ENCODE measurements at regions of chr20 and their contacts with region 1.

Region 1: DNA sequence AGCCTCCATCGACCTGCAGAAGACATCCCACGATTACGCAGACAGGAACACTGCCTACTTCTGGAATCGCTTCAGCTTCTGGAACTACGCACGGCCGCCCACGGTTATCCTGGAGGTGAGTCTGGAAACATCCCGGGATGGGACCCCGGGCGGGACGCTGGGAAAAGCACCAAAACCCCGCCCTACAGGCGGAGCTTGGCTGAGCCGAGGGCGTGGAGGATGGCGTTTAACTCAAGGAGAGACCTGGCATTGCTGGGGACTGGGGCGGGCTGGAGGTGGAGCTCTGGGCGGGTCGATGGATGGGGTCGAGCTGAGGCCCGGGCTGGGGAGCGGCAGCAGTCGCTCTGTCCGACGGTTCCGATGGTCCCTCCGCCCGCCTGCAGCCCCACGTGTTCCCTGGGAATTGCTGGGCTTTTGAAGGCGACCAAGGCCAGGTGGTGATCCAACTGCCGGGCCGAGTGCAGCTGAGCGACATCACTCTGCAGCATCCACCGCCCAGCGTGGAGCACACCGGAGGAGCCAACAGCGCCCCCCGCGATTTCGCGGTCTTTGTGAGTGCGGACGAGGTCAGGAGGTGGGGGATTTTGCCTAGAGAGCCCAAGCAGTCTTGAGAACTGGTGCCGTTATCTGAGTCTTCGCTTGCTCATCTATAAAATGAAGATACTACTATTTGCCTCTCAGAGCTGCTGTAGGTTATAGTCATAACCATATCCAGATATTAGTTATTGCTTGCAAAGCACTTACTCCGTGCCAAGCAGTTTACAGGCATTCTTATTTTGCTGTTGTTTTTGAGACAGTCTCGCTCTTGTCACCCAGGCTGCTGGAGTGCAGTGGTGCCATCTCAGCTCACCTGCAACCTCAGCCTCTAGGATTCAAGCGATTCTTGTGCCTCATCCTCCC is 3.8 kb downstream of the SPAG4 start:
- DNase-seq: peak; percentile 78
- H3K4me3 ChIP-seq: peak overlapping the region; percentile 25 to 55 (median 51)
- H3K27ac ChIP-seq: no peak overlapping the region
- H3K4me1 ChIP-seq: peaks cover 33% of the 10 kb centered on the region
- H3K27me3 ChIP-seq: no peaks in the 10 kb centered on the region
- CTCF ChIP-seq: peak; percentile 33 to 46

Region 2: DNA sequence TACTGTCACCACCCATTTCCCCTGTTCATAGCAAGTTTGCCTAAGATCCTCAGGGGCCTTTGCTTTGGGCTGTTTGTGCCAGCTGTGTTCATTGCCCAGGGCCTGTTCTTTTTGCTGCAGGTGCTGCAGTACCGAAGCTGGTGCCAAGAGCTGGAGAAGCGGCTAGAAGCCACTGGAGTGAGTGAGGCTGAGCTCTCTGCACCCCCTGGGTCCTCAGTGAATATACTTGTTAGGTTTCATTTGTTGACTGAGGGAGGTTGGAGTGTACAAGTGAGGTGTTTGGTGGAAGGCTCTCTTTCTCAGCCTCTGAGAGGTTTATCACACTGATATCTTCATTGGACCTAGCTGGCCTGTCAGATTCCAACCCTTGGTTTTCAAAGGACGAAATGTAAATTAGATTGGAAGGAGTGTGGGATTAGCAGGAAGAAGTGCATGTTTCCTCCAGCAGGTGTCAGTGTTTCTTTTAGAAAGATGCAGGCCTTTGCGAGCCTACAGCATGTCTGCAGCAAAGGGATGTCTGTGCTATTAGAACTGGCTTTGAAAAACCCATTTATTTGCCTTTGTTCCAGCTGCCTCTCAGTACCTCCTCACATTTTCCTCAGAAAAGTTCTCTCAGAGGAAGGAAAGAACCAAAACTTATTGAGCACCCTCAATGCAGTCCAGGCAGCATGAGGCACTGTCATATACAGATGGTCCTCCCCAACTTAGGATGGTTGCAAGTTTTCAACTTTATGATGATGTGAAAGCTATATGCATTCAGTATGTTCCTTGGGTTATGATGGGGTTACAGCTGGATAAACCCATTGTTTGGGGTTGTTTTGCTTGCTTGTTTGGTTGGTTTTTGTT is 155.8 kb before region 1 on chr20:
- CTCF ChIA-PET with region 1: interaction called, 19 read pairs
- dilution Hi-C with region 1: no loop called
- in situ Hi-C with region 1: no loop called
- intact Hi-C with region 1: loop called (anchors 5 kb)
- DNase-seq: peak; percentile 29
- H3K4me3 ChIP-seq: no peak overlapping the region
- H3K27ac ChIP-seq: no peak overlapping the region
- H3K4me1 ChIP-seq: no peaks in the 10 kb centered on the region
- H3K27me3 ChIP-seq: no peaks in the 10 kb centered on the region
- CTCF ChIP-seq: peak; percentile 71 to 78

Region 3: GRCh38 chr20:35568645-35569262 is 50.7 kb before region 1 on chr20:
- CTCF ChIA-PET with region 1: no interaction called
- dilution Hi-C with region 1: no loop called
- in situ Hi-C with region 1: no loop called
- intact Hi-C with region 1: loop called (anchors 1 kb)
- DNase-seq: peak; percentile 26
- H3K4me3 ChIP-seq: no peak overlapping the region
- H3K27ac ChIP-seq: no peak overlapping the region
- H3K4me1 ChIP-seq: no peaks in the 10 kb centered on the region
- H3K27me3 ChIP-seq: no peaks in the 10 kb centered on the region
- CTCF ChIP-seq: peak; percentile 39 to 48

Region 4: GRCh38 chr20:35664544-35665221 is 45.2 kb after region 1 on chr20 and contains the starts of genes CPNE1 and RBM12:
- CTCF ChIA-PET with region 1: no interaction called
- dilution Hi-C with region 1: no loop called
- in situ Hi-C with region 1: no loop called
- intact Hi-C with region 1: loop called (anchors 2 kb)
- DNase-seq: peak; percentile 84
- H3K4me3 ChIP-seq: peak within 1 kb of the TSS; percentile 65 to 97 (median 87)
- H3K27ac ChIP-seq: peak within 1 kb of the TSS; percentile 89
- H3K4me1 ChIP-seq: peaks cover 30% of the 10 kb centered on the region
- H3K27me3 ChIP-seq: no peaks in the 10 kb centered on the region
- CTCF ChIP-seq: no peak
- total RNA-seq, gene CPNE1: 110 to 157 TPM
- total RNA-seq, gene RBM12: 62.8 to 71.2 TPM

Region 5: GRCh38 chr20:35699127-35699975 is 79.9 kb after region 1 on chr20 and contains the starts of genes NFS1 and ROMO1:
- CTCF ChIA-PET with region 1: no interaction called
- dilution Hi-C with region 1: no loop called
- in situ Hi-C with region 1: no loop called
- intact Hi-C with region 1: loop called (anchors 5 kb)
- DNase-seq: peak; percentile 78
- H3K4me3 ChIP-seq: peak within 1 kb of the TSS; percentile 58 to 94 (median 81)
- H3K27ac ChIP-seq: peak within 1 kb of the TSS; percentile 78
- H3K4me1 ChIP-seq: peaks cover 17% of the 10 kb centered on the region
- H3K27me3 ChIP-seq: no peaks in the 10 kb centered on the region
- CTCF ChIP-seq: peak in 1 of 2 donors; percentile 29
- total RNA-seq, gene NFS1: 28.8 to 33.0 TPM
- total RNA-seq, gene ROMO1: 113 to 176 TPM

Region 6: DNA sequence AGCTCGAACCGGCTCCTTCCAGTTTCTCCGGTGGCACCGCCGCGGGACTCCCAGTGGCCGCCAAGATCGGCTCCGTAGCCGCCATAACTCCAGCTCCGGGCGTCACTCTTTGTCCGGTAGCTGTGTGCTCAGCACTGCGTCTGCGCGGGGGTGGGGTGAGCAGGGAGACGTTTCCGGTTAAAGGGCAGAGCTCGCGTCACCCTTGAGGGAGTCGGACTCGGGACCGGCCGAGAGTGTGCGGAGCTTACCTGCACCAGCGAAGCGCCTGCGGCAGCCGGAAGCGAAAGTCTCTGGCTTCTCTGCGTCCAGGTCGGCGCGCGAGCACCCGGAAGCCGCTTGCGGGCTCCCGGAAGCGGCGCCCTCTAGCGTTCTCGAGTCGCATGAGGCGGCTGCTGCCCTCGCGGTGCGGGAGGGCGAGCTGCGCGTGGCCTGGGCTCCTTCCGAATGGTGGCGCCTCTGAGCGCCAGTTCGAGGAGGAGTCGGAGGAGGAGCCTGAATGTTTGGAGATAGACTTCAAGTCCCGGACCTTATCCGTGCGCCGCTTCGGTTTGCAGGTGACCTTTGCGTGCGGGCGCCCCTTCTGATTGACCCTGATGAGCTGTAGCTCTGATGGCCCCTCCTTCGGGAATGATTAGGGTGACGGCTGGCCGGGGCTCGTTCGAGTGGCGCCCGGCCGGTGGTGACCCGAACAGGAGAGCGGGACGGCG is 334.9 kb after region 1 on chr20 and contains the start of gene SCAND1:
- CTCF ChIA-PET with region 1: no interaction called
- dilution Hi-C with region 1: no loop called
- in situ Hi-C with region 1: no loop called
- intact Hi-C with region 1: loop called (anchors 5 kb)
- DNase-seq: peak; percentile 99
- H3K4me3 ChIP-seq: peak within 1 kb of the TSS; percentile 92 to 100 (median 99)
- H3K27ac ChIP-seq: peak within 1 kb of the TSS; percentile 96
- H3K4me1 ChIP-seq: peaks cover 14% of the 10 kb centered on the region
- H3K27me3 ChIP-seq: no peaks in the 10 kb centered on the region
- CTCF ChIP-seq: peak; percentile 85 to 99
- total RNA-seq, gene SCAND1: 41.5 to 46.3 TPM

Region 7: DNA sequence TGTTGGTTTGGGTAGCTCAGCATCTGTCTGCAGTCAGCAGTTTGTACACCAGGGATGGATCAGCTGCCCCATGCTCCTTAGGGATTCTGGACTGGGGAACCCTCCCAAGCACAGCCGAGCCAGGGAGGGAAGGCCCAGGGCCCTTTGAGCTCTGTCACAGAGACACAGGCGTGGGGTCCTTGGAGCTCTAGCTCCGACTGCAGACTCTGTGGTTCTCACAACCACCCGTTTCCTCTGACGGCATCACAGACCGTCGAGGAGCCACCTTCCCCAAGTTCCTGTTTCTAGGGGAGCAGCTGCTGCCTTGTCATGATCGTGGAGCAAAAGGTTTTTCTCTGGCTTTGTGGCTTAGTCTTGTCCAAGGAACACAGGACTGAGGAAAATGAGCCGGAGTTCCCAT is 1026.6 kb after region 1 on chr20 and contains the start of gene SLA2:
- CTCF ChIA-PET with region 1: no interaction called
- dilution Hi-C with region 1: no loop called
- in situ Hi-C with region 1: no loop called
- intact Hi-C with region 1: no loop called
- DNase-seq: no peak
- H3K4me3 ChIP-seq: no peak within 1 kb of the TSS
- H3K27ac ChIP-seq: no peak within 1 kb of the TSS
- H3K4me1 ChIP-seq: peaks cover 10% of the 10 kb centered on the region
- H3K27me3 ChIP-seq: no peaks in the 10 kb centered on the region
- CTCF ChIP-seq: no peak
- total RNA-seq, gene SLA2: not detected

Measured in mammary epithelial cell (primary cell).